ENCODE measurements at regions of chr5 and their contacts with region 1.

Region 1: GRCh38 chr5:58849921-58850667 is 267.2 kb downstream of the RAB3C start:
- DNase-seq: no peak
- H3K4me3 ChIP-seq: no peak overlapping the region
- H3K27ac ChIP-seq: no peak overlapping the region
- H3K4me1 ChIP-seq: peaks cover 0 to 6% (median 4%) of the 10 kb centered on the region in 4 experiments; a peak in 5 of 7 replicates
- H3K27me3 ChIP-seq: no peaks in the 10 kb centered on the region
- CTCF ChIP-seq: peak in 2 of 3 experiments; percentile 54 to 56; a peak in 3 of 4 replicates
- EP300 ChIP-seq: no peak
- POLR2A ChIP-seq: no peak
- RAD21 ChIP-seq: peak; percentile 80 to 84

Region 2: DNA sequence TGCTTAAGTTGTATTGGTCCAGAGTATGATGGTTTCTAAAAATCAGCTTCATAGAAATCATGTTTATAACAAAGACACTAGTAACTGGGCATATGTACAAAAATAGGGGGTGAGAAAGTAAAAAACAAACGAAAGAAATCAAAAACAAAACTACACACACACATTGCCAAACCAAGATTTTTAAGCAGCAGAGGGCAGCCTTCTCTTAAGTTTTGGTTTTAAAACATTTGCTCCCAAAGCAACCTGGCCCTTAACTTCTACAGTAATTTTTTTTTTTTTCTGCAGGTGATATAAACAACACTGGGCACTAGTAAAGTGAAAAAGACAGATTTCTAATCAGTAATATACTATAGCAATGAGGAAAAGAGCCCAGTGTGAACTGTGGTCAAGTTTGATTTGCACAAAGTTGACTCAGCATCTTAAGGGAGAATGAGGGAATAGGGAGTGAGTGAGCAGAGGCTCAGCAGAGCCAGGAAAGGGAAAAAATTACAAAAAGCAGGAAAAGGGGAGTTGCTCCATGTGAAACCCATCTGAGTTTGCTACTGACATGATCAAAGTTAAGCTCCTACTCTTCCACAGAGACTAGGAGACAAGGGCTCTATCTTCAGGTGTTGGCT is 372.2 kb before region 1 on chr5:
- CTCF ChIA-PET with region 1: interaction called, 56 read pairs
- POLR2A ChIA-PET with region 1: no interaction called
- DNase-seq: no peak
- H3K4me3 ChIP-seq: no peak overlapping the region
- H3K27ac ChIP-seq: no peak overlapping the region
- H3K4me1 ChIP-seq: no peaks in the 10 kb centered on the region
- H3K27me3 ChIP-seq: no peaks in the 10 kb centered on the region
- CTCF ChIP-seq: peak in 2 of 3 experiments; percentile 25 to 34; a peak in 2 of 4 replicates
- EP300 ChIP-seq: no peak
- POLR2A ChIP-seq: no peak
- RAD21 ChIP-seq: peak; percentile 58 to 66

Region 3: GRCh38 chr5:58498340-58498942 is 351.7 kb before region 1 on chr5:
- CTCF ChIA-PET with region 1: interaction called, 201 read pairs
- POLR2A ChIA-PET with region 1: no interaction called
- DNase-seq: peak; percentile 10 to 66
- H3K4me3 ChIP-seq: no peak overlapping the region
- H3K27ac ChIP-seq: no peak overlapping the region
- H3K4me1 ChIP-seq: no peaks in the 10 kb centered on the region
- H3K27me3 ChIP-seq: peaks cover 0 to 1% (median 0%) of the 10 kb centered on the region in 4 experiments; a peak in 1 of 7 replicates
- CTCF ChIP-seq: peak in 2 of 3 experiments; percentile 61 to 72; a peak in 2 of 4 replicates
- EP300 ChIP-seq: no peak
- POLR2A ChIP-seq: no peak
- RAD21 ChIP-seq: peak; percentile 76

Region 4: DNA sequence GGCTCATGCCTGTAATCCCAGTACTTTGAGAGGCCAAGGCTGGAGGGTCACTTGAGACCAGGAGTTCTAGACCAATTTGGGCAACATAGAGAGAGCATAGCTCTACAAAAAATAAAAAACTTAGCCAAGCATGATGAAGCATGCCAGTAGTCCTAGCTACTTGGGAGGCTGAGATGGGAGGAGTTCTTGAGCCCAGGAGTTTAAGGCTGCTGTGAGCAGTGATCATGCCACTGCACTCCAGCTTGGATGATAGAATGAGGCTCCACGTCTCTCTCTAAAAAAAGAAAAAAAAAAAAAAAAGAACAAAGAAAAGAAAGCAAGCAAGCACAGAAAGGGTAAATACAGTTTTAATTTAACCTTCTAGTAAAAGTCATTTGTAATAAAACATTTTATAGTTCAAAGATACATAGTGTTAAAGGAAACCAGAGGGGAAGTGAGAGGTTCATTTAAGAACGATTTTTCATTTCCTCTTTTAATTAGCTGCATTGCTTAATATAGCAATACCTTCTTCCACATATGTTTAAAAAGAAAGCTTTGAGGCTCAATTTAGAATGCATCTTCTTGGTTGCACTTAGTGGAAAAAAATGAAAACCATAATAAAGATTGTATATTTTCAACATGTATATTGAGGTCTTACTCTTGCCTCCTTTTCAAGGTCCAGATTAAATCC is 344.0 kb before region 1 on chr5:
- CTCF ChIA-PET with region 1: interaction called, 201 read pairs
- POLR2A ChIA-PET with region 1: no interaction called
- DNase-seq: no peak
- H3K4me3 ChIP-seq: no peak overlapping the region
- H3K27ac ChIP-seq: no peak overlapping the region
- H3K4me1 ChIP-seq: peaks cover 0 to 3% (median 0%) of the 10 kb centered on the region in 4 experiments; a peak in 1 of 7 replicates
- H3K27me3 ChIP-seq: peaks cover 0 to 1% (median 0%) of the 10 kb centered on the region in 4 experiments; a peak in 1 of 7 replicates
- CTCF ChIP-seq: no peak
- EP300 ChIP-seq: no peak
- POLR2A ChIP-seq: no peak
- RAD21 ChIP-seq: no peak

Region 5: DNA sequence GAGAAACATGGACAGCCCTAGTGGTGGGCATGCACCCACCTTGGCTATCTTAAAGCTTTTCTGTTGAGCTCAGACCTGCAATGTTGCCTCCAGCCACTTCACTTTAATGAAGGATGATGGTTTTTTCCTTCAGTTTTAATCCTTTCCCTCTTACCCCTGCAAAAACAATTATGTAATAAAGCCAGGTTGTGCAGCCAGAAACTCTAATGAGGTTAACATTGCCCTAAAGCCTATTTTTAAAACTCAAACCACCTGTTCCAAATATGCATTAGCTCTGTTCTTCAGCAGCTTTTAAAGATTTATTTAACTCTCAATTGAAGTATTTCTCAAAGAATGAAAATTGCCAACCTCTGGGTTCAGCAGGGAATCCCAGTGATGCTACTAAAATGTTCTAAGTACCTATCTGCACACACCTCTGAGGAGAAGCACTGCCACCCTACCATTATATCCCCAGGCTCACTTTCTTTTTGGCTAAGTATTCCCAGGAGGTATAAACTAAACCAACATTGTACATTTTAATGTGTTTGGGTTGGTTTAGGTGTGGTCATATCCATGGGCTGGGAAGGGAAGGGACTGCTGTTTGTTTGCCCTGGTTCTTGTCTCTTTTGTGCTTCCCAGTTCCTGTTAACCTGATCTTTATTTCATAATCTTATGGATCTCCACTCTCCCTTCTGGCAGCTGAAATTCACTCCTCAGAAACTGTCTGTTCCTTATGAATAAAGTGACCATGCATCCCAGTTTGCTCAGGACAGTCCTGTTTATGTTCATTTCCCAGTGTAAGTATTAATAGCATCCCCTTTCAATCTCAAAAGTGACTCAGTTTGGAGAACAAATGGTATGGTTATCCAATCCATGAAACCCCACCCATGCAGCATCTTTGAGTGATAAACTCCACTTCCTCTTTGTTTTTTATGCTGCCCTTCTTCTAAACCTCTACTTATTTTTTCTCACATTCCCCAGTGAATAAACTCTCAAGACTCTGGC is 15.6 kb before region 1 on chr5:
- CTCF ChIA-PET with region 1: interaction called, 29 read pairs
- POLR2A ChIA-PET with region 1: no interaction called
- DNase-seq: no peak
- H3K4me3 ChIP-seq: no peak overlapping the region
- H3K27ac ChIP-seq: no peak overlapping the region
- H3K4me1 ChIP-seq: no peaks in the 10 kb centered on the region
- H3K27me3 ChIP-seq: no peaks in the 10 kb centered on the region
- CTCF ChIP-seq: no peak
- EP300 ChIP-seq: no peak
- POLR2A ChIP-seq: no peak
- RAD21 ChIP-seq: no peak

Region 6: DNA sequence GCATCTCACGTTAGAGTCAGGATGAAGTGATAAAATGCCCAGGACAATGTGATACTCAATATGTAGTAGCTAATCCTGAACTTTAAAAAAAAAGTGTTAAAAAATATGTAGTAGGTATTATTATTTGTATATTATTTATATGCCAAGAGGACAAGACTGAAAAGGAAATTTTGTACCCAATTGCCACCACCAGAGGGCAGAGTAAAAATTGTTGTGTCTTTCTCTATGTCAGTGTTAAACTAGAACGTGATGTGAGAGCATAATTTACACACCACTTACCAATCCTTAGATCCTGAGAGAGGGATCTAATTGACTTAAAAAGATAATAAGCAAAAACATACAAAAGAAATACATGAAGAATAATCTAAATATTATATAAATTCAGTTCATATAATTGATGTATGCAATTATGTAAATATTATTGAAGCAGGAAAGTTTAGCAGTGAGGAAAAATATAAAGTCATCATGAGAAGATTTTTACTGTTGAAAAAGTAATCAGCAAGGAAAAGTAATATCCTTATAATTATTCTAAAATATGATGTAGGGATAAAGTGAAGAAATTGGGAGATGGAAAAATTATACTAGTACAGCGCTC is 21.7 kb after region 1 on chr5:
- CTCF ChIA-PET with region 1: interaction called, 13 read pairs
- POLR2A ChIA-PET with region 1: no interaction called
- DNase-seq: no peak
- H3K4me3 ChIP-seq: no peak overlapping the region
- H3K27ac ChIP-seq: no peak overlapping the region
- H3K4me1 ChIP-seq: no peaks in the 10 kb centered on the region
- H3K27me3 ChIP-seq: no peaks in the 10 kb centered on the region
- CTCF ChIP-seq: peak in 2 of 3 experiments; percentile 33 to 38; a peak in 2 of 4 replicates
- EP300 ChIP-seq: no peak
- POLR2A ChIP-seq: no peak
- RAD21 ChIP-seq: peak; percentile 37 to 40

Measured in H1 (cell line).